Activated CD8-positive, alpha-beta T cell treated with anti-CD3 and anti-CD28 coated beads, Interleukin-2, amount 10 ng/mL, durations not matched to agents 7 days and 5 days (primary cell): ENCODE measurements at regions of chrX and their contacts with region 1.

Region 1: DNA sequence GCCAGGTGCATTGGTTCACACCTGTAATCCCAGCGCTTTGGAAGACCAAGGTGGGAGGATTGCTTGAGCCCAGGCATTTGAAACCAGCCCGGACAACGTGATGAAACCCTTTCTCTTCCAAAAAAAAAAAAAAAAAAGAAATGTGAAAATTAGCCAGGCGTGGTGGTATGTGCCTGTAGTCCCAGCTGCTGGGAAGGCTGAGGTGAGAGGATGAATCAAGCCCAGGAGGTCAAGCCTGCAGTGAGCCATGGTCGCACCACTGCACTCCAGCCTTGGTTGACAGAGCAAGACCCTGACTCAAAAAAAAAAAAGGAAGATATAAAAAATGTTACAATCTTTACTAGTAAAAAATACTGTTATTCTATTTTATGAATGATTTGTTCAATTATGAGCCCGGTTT is 5.9 kb downstream of the FAM199X start:
- DNase-seq: no peak
- ATAC-seq: no peak
- H3K4me3 Mint-ChIP-seq: no peak overlapping the region
- H3K27ac Mint-ChIP-seq: no peak overlapping the region
- H3K4me1 Mint-ChIP-seq: peaks cover 21% of the 10 kb centered on the region
- H3K27me3 Mint-ChIP-seq: no peaks in the 10 kb centered on the region

Region 2: DNA sequence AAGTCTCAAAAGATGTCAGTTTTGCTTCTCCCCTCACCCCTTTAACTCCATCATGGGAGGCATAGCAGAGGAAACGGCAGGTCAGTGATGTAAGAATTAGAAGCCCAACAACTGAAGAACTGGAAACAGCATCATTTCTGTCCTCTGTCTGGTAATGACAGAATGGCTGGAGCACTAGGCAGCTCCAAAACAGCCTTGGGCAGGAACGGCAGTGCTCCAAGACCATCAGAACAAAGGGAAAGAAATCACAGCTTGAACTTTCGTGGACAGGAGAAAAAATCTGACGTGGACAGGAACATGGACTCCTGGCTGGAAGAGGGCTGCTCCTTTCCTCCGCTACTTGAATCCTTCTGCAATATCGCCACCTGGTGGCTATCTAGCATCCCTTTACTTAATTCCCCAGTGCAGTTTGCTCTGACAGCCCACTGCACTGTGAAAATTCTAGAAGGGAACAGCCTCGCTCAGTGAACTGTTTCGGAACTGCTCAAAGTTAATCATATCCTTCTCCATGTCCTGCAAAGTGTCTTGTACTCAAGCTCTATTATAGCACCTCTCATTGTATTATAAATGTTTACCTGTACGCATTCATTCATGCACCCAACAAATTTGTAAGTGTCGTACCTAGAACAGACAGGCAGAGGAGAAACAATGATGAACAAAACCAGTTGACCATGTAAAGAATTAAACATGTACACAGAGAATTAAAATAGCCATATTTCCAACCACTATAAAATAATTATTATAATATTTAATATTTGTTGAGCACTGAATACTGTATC is 35.7 kb before region 1 on chrX:
- CTCF ChIA-PET with region 1: no interaction called
- POLR2A ChIA-PET with region 1: no interaction called
- DNase-seq: peak; percentile 64
- ATAC-seq: peak; percentile 84
- H3K4me3 Mint-ChIP-seq: no peak overlapping the region
- H3K27ac Mint-ChIP-seq: no peak overlapping the region
- H3K4me1 Mint-ChIP-seq: peaks cover 26% of the 10 kb centered on the region
- H3K27me3 Mint-ChIP-seq: no peaks in the 10 kb centered on the region

Region 3: DNA sequence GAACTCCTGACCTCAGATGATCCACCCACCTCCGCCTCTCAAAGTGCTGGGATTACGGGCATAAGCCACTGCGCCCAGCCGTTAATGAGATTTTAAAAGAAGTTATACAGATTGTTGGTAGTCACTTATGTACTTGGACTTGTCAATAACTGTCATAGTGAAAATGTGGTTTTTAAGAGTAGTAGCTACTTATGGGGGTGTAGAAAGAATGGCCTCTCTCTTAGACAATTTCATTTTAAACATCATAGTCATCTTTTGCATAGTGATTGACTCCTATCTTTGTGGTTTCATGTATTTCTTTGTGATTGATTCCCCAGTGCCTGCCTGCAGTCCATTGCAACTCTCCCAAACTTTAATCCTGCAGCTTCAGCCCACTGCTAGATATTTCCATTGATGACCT is 11.6 kb after region 1 on chrX:
- CTCF ChIA-PET with region 1: no interaction called
- POLR2A ChIA-PET with region 1: no interaction called
- DNase-seq: no peak
- ATAC-seq: no peak
- H3K4me3 Mint-ChIP-seq: no peak overlapping the region
- H3K27ac Mint-ChIP-seq: no peak overlapping the region
- H3K4me1 Mint-ChIP-seq: no peaks in the 10 kb centered on the region
- H3K27me3 Mint-ChIP-seq: no peaks in the 10 kb centered on the region

Region 4: GRCh38 chrX:104195489-104196084 is 23.5 kb after region 1 on chrX:
- CTCF ChIA-PET with region 1: interaction called, 11 read pairs
- POLR2A ChIA-PET with region 1: no interaction called
- DNase-seq: peak; percentile 24
- ATAC-seq: no peak
- H3K4me3 Mint-ChIP-seq: no peak overlapping the region
- H3K27ac Mint-ChIP-seq: no peak overlapping the region
- H3K4me1 Mint-ChIP-seq: no peaks in the 10 kb centered on the region
- H3K27me3 Mint-ChIP-seq: no peaks in the 10 kb centered on the region

Region 5: GRCh38 chrX:104250470-104250869 is 78.3 kb after region 1 on chrX:
- CTCF ChIA-PET with region 1: no interaction called
- POLR2A ChIA-PET with region 1: no interaction called
- DNase-seq: no peak
- ATAC-seq: no peak
- H3K4me3 Mint-ChIP-seq: no peak overlapping the region
- H3K27ac Mint-ChIP-seq: no peak overlapping the region
- H3K4me1 Mint-ChIP-seq: peaks cover 8% of the 10 kb centered on the region
- H3K27me3 Mint-ChIP-seq: peaks cover 24% of the 10 kb centered on the region